ENCODE measurements at regions of chr7 and their contacts with region 1.

Region 1: DNA sequence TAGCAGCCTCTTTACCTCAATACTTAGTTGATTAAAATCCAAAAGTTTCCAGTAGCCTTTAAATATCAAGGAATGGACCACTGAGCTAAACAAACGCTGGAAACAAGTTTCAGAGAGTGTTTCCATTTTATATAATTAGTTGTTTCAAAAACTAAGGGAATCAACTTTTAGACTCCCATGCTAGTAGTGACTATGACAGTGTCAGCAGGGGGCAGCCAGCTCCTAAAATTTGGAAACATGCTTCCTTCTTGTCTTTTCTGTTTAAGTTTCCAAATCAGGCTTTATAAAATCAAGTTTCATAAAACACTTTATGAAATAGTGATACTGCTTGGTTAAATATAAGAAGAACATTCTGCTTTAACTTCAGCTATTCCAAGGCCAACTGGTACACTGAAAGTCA is 138.2 kb upstream of the TMEM229A start:
- DNase-seq: peak in 3 of 4 donors; percentile 16 to 31 (median 20)
- ATAC-seq: no peak
- H3K4me3 ChIP-seq: no peak overlapping the region
- H3K27ac ChIP-seq: no peak overlapping the region
- H3K4me1 ChIP-seq: no peaks in the 10 kb centered on the region
- H3K27me3 ChIP-seq: no peaks in the 10 kb centered on the region
- CTCF ChIP-seq: peak in 4 of 7 experiments; percentile 31 to 37 (median 33)
- POLR2A ChIP-seq: no peak

Region 2: GRCh38 chr7:124784879-124785818 is 614.1 kb after region 1 on chr7:
- intact Hi-C with region 1: loop called (anchors 10 kb)
- DNase-seq: peak; percentile 64 to 70 (median 67)
- ATAC-seq: peak; percentile 88
- H3K4me3 ChIP-seq: no peak overlapping the region
- H3K27ac ChIP-seq: no peak overlapping the region
- H3K4me1 ChIP-seq: no peaks in the 10 kb centered on the region
- H3K27me3 ChIP-seq: no peaks in the 10 kb centered on the region
- CTCF ChIP-seq: peak; percentile 57 to 92 (median 79)
- POLR2A ChIP-seq: no peak

Measured in body of pancreas (tissue), 4 donors.